HCT116 (cell line): ENCODE measurements at regions of chr1 and their contacts with region 1.

Region 1: GRCh38 chr1:152398812-152399698 is 15.0 kb downstream of the CRNN start:
- DNase-seq: peak; percentile 63
- ATAC-seq: peak; percentile 95
- H3K4me3 ChIP-seq: no peak overlapping the region
- H3K27ac ChIP-seq: no peak overlapping the region
- H3K4me1 ChIP-seq: peaks cover 3 to 7% of the 10 kb centered on the region in 2 experiments; a peak in 2 of 4 replicates
- H3K27me3 ChIP-seq: peaks cover 25% of the 10 kb centered on the region
- CTCF ChIP-seq: peak; percentile 80 to 97 (median 81)
- POLR2A ChIP-seq: no peak
- RAD21 ChIP-seq: peak; percentile 65

Region 2: GRCh38 chr1:151773702-151774101 is 625.4 kb before region 1 on chr1:
- CTCF ChIA-PET with region 1: no interaction called
- POLR2A ChIA-PET with region 1: no interaction called
- RAD21 ChIA-PET with region 1: no interaction called
- intact Hi-C with region 1: no loop called
- DNase-seq: no peak
- ATAC-seq: no peak
- H3K4me3 ChIP-seq: no peak overlapping the region
- H3K27ac ChIP-seq: no peak overlapping the region
- H3K4me1 ChIP-seq: peaks cover 0 to 5% of the 10 kb centered on the region in 2 experiments; a peak in 1 of 4 replicates
- H3K27me3 ChIP-seq: no peaks in the 10 kb centered on the region
- CTCF ChIP-seq: no peak
- POLR2A ChIP-seq: no peak
- RAD21 ChIP-seq: no peak

Region 3: DNA sequence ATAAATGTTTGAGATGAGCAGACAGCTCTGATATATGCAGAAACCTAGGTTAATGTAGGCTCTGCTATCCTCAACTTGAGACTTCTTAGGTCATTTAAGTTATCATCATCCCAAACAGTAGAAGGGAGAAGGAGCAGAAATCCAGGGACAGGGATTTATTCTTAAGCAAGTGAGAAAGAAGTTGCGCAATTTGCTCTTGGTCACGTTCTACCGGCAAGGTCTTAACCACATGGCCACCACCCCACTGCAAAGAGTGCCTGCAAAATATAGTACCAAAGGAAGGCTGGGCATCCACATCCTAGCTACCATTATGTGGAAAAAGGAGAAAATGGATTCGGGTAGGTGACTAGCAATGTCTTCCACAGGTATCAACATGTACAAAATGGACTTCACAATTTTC is 10.2 kb before region 1 on chr1:
- CTCF ChIA-PET with region 1: interaction called, 31 read pairs
- POLR2A ChIA-PET with region 1: no interaction called
- RAD21 ChIA-PET with region 1: no interaction called
- intact Hi-C with region 1: no loop called
- DNase-seq: no peak
- ATAC-seq: no peak
- H3K4me3 ChIP-seq: no peak overlapping the region
- H3K27ac ChIP-seq: no peak overlapping the region
- H3K4me1 ChIP-seq: peaks cover 0 to 9% of the 10 kb centered on the region in 2 experiments; a peak in 2 of 4 replicates
- H3K27me3 ChIP-seq: peaks cover 59% of the 10 kb centered on the region
- CTCF ChIP-seq: no peak
- POLR2A ChIP-seq: no peak
- RAD21 ChIP-seq: no peak

Region 4: GRCh38 chr1:152410599-152410998 is 11.5 kb after region 1 on chr1:
- CTCF ChIA-PET with region 1: interaction called, 20 read pairs
- POLR2A ChIA-PET with region 1: no interaction called
- RAD21 ChIA-PET with region 1: no interaction called
- intact Hi-C with region 1: no loop called
- DNase-seq: no peak
- ATAC-seq: no peak
- H3K4me3 ChIP-seq: no peak overlapping the region
- H3K27ac ChIP-seq: no peak overlapping the region
- H3K4me1 ChIP-seq: no peaks in the 10 kb centered on the region
- H3K27me3 ChIP-seq: 0 out of 2 replicates have a peak, but pooled peaks cover 8% of the 10 kb centered on the region
- CTCF ChIP-seq: no peak
- POLR2A ChIP-seq: no peak
- RAD21 ChIP-seq: no peak

Region 5: DNA sequence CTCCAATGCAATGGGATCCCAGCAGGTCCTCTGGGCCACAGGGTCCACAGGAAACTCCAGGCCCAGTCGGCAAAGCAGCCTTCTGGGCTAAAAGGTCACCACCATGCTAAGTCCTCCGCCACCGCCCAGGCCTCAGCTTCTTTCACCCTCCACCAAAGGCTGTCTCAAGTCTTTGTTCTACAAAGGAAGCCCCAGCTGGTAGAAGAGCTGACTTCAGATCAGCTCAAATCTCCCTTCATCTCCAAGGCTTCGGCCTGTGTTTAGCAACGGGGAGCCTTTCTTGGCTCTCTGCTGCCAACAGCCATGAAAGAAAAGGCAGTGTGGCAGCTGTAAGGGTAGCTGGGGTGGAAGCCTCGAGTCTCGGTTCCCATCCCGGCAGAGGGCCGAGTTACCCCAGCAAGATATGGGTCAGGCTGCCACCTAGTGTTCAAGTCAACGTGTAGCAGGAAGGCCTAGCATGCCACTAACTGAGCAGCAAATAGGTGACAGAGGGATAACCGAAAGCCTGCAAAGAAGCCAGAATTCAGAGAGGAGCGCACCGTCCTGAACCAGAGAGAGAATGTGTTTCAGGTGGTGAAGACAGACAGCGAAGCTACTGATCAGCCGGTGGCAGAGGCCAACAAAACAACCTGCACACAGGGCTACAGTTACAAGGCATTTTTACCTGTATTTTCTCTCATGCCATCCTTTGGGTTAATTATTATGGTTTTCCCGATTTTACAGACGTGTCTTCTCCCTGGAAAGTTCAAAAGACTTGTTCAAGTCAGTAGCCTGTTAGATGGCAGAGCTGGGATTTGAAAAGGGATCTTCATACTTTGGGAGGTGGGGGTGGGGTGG is 41.8 kb after region 1 on chr1:
- CTCF ChIA-PET with region 1: interaction called, 78 read pairs
- POLR2A ChIA-PET with region 1: interaction called, 5 read pairs
- RAD21 ChIA-PET with region 1: interaction called, 7 read pairs
- intact Hi-C with region 1: loop called (anchors 1 kb)
- DNase-seq: peak; percentile 63
- ATAC-seq: peak; percentile 99
- H3K4me3 ChIP-seq: no peak overlapping the region
- H3K27ac ChIP-seq: no peak overlapping the region
- H3K4me1 ChIP-seq: peaks cover 0 to 14% of the 10 kb centered on the region in 2 experiments; a peak in 2 of 4 replicates
- H3K27me3 ChIP-seq: peaks cover 6% of the 10 kb centered on the region; the same call in 1 of the 2 replicates
- CTCF ChIP-seq: peak; percentile 85 to 93 (median 92)
- POLR2A ChIP-seq: no peak
- RAD21 ChIP-seq: peak; percentile 83

Region 6: DNA sequence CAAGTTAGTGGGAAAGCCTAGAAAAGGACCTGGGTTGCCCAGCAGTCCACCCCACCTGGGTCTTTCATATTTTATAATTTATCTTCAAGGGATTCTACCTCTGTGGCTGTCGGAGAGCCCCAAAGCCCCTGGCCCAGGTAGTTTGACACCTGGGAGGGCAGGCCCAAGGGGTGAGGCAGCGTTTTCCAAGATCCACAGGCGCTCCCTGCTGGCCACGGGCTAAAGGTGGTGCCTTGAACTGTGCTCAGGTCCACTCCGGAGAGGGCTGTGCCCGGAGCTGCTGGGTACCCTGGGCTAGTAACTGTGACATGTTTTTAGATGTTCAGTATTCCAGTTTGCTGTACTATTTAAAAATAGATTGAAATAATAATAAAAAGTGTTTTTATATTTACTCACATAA is 52.2 kb after region 1 on chr1:
- CTCF ChIA-PET with region 1: interaction called, 13 read pairs
- POLR2A ChIA-PET with region 1: no interaction called
- RAD21 ChIA-PET with region 1: no interaction called
- intact Hi-C with region 1: no loop called
- DNase-seq: no peak
- ATAC-seq: peak; percentile 99
- H3K4me3 ChIP-seq: no peak overlapping the region
- H3K27ac ChIP-seq: no peak overlapping the region
- H3K4me1 ChIP-seq: no peaks in the 10 kb centered on the region
- H3K27me3 ChIP-seq: no peaks in the 10 kb centered on the region
- CTCF ChIP-seq: peak; percentile 50 to 69 (median 60); a peak in 5 of 6 replicates
- POLR2A ChIP-seq: no peak
- RAD21 ChIP-seq: peak; percentile 51

Region 7: DNA sequence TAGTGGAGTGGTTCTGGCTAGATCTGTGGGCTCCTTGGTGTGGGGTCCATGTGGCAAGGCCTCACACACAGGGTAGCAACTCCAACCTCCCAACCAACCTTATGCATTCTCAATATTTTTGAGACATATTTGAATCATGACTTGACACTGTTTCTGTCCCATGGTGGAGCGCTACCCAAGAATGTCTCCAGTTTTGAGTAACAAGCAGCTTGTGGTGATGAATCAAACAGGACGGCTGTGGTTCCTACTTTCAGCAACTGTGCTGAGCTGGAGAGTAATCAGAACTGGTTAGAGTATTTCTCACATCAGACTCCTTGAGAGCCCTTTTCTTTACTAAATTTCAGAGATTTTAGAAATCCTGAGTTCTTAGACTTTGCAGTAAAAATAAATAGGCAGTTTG is 178.1 kb after region 1 on chr1:
- CTCF ChIA-PET with region 1: no interaction called
- POLR2A ChIA-PET with region 1: no interaction called
- RAD21 ChIA-PET with region 1: no interaction called
- intact Hi-C with region 1: no loop called
- DNase-seq: no peak
- ATAC-seq: no peak
- H3K4me3 ChIP-seq: no peak overlapping the region
- H3K27ac ChIP-seq: no peak overlapping the region
- H3K4me1 ChIP-seq: no peaks in the 10 kb centered on the region
- H3K27me3 ChIP-seq: peaks cover 46% of the 10 kb centered on the region
- CTCF ChIP-seq: no peak
- POLR2A ChIP-seq: no peak
- RAD21 ChIP-seq: no peak

Region 8: GRCh38 chr1:153404768-153405167 is 1005.7 kb after region 1 on chr1:
- CTCF ChIA-PET with region 1: no interaction called
- POLR2A ChIA-PET with region 1: no interaction called
- RAD21 ChIA-PET with region 1: no interaction called
- intact Hi-C with region 1: no loop called
- DNase-seq: peak; percentile 39
- ATAC-seq: peak; percentile 87
- H3K4me3 ChIP-seq: no peak overlapping the region
- H3K27ac ChIP-seq: no peak overlapping the region
- H3K4me1 ChIP-seq: no peaks in the 10 kb centered on the region
- H3K27me3 ChIP-seq: peaks cover 59% of the 10 kb centered on the region
- CTCF ChIP-seq: peak; percentile 62 to 78 (median 68); a peak in 5 of 6 replicates
- POLR2A ChIP-seq: no peak
- RAD21 ChIP-seq: no peak; the same call in 1 of the 2 replicates